ENCODE measurements at regions of chrX and their contacts with region 1.

Region 1: DNA sequence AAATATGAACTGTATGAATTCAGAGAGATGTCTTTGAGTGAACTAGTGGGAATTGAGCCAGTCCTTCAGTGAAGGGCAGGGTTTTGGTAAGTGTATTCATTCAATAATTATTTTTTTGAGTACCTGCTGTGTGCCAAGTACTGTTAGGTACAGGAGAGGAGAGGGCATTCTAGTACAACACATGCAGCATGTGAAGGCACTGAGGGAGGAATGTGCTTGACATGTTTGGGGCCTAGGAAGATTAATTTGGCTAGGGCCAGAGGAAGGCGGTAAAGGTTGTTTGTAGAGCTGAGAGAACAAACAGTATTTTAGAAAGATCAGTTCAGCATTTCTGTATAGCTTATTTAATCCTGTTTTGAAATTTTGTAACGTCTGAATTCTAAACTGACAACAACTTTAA is 27.8 kb downstream of the APOOL start:
- DNase-seq: no peak
- CTCF ChIP-seq: no peak

Region 2: DNA sequence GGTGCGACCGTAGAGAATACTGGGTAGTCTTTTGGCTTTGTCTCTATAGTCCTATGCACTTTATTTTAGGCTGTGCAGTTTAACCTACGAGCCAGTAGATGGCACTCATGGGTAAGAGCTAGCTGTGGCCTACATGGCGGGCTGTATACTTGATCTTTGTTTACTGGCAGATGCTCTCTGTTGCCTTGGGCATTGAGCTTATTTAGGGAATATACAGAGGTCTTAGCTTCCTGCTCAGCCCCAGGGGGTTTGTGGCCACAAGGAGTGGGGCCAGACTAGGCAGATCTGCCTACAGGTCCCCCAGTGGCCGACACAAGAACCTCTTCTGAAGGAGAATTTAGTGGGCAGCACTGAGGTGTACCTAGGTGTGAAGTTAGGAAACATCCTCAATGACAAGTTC is 301.7 kb before region 1 on chrX:
- in situ Hi-C with region 1: loop called (anchors 25 kb)
- DNase-seq: peak; percentile 23
- CTCF ChIP-seq: peak; percentile 76

Region 3: GRCh38 chrX:85326234-85327059 is 294.9 kb after region 1 on chrX:
- in situ Hi-C with region 1: no loop called
- DNase-seq: no peak
- CTCF ChIP-seq: no peak

Measured in GM13976 (cell line).